ENCODE measurements at regions of chr1 and their contacts with region 1.

Region 1: GRCh38 chr1:100045206-100045605 is 75.4 kb downstream of the SLC35A3 start:
- DNase-seq: no peak
- ATAC-seq: no peak
- H3K4me3 ChIP-seq: no peak overlapping the region
- H3K4me3 Mint-ChIP-seq: no peak overlapping the region
- H3K27ac ChIP-seq: no peak overlapping the region
- H3K27ac Mint-ChIP-seq: peak overlapping the region; percentile 1
- H3K4me1 ChIP-seq: peaks cover 70% of the 10 kb centered on the region
- H3K4me1 Mint-ChIP-seq: peaks cover 83% of the 10 kb centered on the region
- H3K27me3 ChIP-seq: no peaks in the 10 kb centered on the region
- H3K27me3 Mint-ChIP-seq: no peaks in the 10 kb centered on the region
- CTCF ChIP-seq: no peak

Region 2: DNA sequence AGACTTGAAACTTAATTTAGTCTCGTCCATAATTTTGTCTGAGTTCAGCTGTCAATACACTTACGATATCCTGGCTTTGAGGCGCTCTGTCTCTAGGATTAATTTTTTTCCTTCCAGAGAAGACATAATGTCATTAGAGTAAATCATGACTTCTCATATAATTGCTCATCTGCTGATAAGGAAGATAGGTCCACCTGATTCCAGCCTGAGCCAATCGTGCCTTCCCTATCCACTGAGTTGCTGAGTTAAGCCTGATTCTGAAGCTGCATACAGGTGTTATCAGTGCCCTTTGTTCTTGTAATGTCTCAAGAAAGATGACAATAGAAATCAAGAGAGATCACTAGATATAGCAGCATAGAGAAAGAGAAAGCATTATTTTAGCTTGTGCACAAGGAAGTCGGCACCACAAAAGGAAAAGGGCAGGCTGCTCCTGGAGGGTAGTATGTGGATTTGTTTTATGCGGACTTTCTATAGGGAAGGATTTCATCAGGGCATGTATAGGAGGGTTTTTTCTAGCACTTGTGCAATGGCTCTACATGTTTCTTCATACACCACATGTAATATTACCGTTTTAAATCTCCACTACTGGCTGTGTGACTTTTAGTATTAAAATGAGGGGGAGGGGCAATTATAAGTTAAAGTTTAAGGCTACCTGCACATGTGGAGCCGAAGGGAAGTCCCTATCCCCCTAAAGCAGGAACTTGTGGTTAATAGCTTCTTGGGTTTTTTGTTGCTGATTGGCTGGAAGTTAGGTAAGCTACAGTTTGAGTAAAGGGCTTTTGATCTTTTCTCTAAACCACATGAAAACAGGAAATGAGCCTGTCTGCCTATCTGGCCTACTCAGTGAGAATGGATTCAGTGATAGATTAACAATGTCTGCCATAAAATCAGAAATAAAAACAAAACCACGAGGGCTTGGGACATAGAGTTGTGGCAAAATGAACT is 1174.0 kb before region 1 on chr1:
- CTCF ChIA-PET with region 1: no interaction called
- POLR2A ChIA-PET with region 1: no interaction called
- intact Hi-C with region 1: loop called in 1 of 2 experiments (anchors 10 kb)
- DNase-seq: peak in 7 of 9 experiments; percentile 18 to 93 (median 53)
- ATAC-seq: peak; percentile 91
- H3K4me3 ChIP-seq: peak overlapping the region; percentile 26 to 38
- H3K4me3 Mint-ChIP-seq: peak overlapping the region; percentile 79
- H3K27ac ChIP-seq: peak overlapping the region; percentile 43 to 73
- H3K27ac Mint-ChIP-seq: peak overlapping the region; percentile 95
- H3K4me1 ChIP-seq: peaks cover 25% of the 10 kb centered on the region
- H3K4me1 Mint-ChIP-seq: peaks cover 27% of the 10 kb centered on the region
- H3K27me3 ChIP-seq: no peaks in the 10 kb centered on the region
- H3K27me3 Mint-ChIP-seq: no peaks in the 10 kb centered on the region
- CTCF ChIP-seq: no peak

Measured in CD8-positive, alpha-beta T cell (primary cell).